ENCODE measurements at regions of chr10 and their contacts with region 1.

Region 1: DNA sequence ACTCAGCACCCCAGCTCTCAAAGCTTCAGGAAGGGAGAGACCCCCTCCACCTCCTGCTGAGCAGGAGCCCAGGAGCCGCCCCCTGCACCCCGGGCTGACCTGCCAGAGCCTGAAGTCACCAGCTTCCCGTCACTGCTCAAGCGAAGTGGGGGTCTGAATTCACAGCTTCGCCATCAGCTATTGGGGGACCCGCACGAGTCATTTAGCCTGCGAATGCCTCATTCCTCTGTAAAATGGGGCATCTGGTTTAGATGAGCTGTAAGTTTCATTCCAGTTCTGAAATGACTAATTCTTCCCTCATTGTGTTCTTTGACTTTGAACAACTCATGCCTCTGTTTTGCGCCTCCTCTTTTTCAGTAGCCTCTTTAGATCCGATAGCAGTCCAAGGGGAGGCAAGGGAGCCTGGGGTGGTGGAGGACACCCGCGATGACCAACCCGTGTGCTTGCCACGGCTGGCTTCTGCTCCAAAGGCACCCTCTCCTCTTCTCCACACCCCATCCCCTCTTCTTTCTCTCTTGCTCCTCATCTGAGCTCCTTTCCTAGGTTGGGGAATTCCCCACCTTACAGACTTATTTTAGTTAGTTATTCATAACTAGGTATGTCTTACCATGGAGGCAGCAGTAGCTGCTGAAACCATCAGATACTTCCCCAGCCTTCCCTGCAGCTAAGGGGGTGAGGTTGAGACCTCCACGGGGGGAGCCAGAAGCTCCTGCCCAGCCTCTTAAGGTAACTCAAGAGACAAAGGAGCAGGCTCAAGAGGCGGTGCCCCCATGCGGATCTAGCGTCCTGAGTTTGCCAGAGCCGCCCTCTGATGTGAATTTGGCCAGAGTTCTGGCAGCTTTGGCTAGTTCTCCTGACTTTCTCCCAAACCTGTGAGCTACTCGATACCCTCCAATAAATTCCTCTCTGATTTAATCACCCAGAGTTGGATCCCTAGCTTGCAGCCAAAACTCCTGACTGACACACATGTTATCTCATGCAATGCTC is 47.7 kb downstream of the RBM17 start:
- DNase-seq: peak; percentile 66
- ATAC-seq: peak; percentile 71
- H3K4me3 ChIP-seq: peak overlapping the region; percentile 54
- H3K27ac ChIP-seq: peak overlapping the region; percentile 63
- H3K4me1 ChIP-seq: peaks cover 38% of the 10 kb centered on the region
- H3K27me3 ChIP-seq: no peaks in the 10 kb centered on the region
- CTCF ChIP-seq: 0 out of 6 replicates have a peak, but pooled peaks of 1 of the 3 experiments have one; percentile 1
- EP300 ChIP-seq: peak in 1 of 2 experiments; percentile 74; a peak in 2 of 4 replicates
- POLR2A ChIP-seq: no peak
- RAD21 ChIP-seq: no peak

Region 2: GRCh38 chr10:6108603-6109443 is 27.7 kb before region 1 on chr10:
- CTCF ChIA-PET with region 1: interaction called, 4 read pairs
- POLR2A ChIA-PET with region 1: no interaction called
- RAD21 ChIA-PET with region 1: interaction called, 4 read pairs
- SMC1A ChIA-PET with region 1: interaction called, 11 read pairs
- in situ Hi-C with region 1: no loop called
- intact Hi-C with region 1: no loop called
- DNase-seq: no peak
- ATAC-seq: peak; percentile 72
- H3K4me3 ChIP-seq: no peak overlapping the region
- H3K27ac ChIP-seq: no peak overlapping the region
- H3K4me1 ChIP-seq: no peaks in the 10 kb centered on the region
- H3K27me3 ChIP-seq: no peaks in the 10 kb centered on the region
- CTCF ChIP-seq: peak; percentile 50 to 77 (median 74); a peak in 5 of 6 replicates
- EP300 ChIP-seq: no peak
- POLR2A ChIP-seq: no peak
- RAD21 ChIP-seq: peak; percentile 79

Region 3: GRCh38 chr10:6163364-6164270 is 27.1 kb after region 1 on chr10:
- CTCF ChIA-PET with region 1: interaction called, 4 read pairs
- POLR2A ChIA-PET with region 1: interaction called, 4 read pairs
- RAD21 ChIA-PET with region 1: interaction called, 3 read pairs
- SMC1A ChIA-PET with region 1: interaction called, 11 read pairs
- in situ Hi-C with region 1: no loop called
- intact Hi-C with region 1: no loop called
- DNase-seq: peak; percentile 47
- ATAC-seq: peak; percentile 99
- H3K4me3 ChIP-seq: peak overlapping the region; percentile 67
- H3K27ac ChIP-seq: peak overlapping the region; percentile 83
- H3K4me1 ChIP-seq: no peaks in the 10 kb centered on the region; the same call in 1 of the 2 replicates
- H3K27me3 ChIP-seq: no peaks in the 10 kb centered on the region
- CTCF ChIP-seq: no peak
- EP300 ChIP-seq: no peak
- POLR2A ChIP-seq: peak; percentile 85
- RAD21 ChIP-seq: no peak

Region 4: GRCh38 chr10:6179078-6179477 is 42.6 kb after region 1 on chr10:
- CTCF ChIA-PET with region 1: no interaction called
- POLR2A ChIA-PET with region 1: no interaction called
- RAD21 ChIA-PET with region 1: no interaction called
- SMC1A ChIA-PET with region 1: no interaction called
- in situ Hi-C with region 1: no loop called
- intact Hi-C with region 1: no loop called
- DNase-seq: no peak
- ATAC-seq: no peak
- H3K4me3 ChIP-seq: no peak overlapping the region
- H3K27ac ChIP-seq: no peak overlapping the region
- H3K4me1 ChIP-seq: peaks cover 7% of the 10 kb centered on the region
- H3K27me3 ChIP-seq: no peaks in the 10 kb centered on the region
- CTCF ChIP-seq: no peak
- EP300 ChIP-seq: no peak
- POLR2A ChIP-seq: no peak
- RAD21 ChIP-seq: no peak